ENCODE measurements at regions of chr19 and their contacts with region 1.

Region 1: DNA sequence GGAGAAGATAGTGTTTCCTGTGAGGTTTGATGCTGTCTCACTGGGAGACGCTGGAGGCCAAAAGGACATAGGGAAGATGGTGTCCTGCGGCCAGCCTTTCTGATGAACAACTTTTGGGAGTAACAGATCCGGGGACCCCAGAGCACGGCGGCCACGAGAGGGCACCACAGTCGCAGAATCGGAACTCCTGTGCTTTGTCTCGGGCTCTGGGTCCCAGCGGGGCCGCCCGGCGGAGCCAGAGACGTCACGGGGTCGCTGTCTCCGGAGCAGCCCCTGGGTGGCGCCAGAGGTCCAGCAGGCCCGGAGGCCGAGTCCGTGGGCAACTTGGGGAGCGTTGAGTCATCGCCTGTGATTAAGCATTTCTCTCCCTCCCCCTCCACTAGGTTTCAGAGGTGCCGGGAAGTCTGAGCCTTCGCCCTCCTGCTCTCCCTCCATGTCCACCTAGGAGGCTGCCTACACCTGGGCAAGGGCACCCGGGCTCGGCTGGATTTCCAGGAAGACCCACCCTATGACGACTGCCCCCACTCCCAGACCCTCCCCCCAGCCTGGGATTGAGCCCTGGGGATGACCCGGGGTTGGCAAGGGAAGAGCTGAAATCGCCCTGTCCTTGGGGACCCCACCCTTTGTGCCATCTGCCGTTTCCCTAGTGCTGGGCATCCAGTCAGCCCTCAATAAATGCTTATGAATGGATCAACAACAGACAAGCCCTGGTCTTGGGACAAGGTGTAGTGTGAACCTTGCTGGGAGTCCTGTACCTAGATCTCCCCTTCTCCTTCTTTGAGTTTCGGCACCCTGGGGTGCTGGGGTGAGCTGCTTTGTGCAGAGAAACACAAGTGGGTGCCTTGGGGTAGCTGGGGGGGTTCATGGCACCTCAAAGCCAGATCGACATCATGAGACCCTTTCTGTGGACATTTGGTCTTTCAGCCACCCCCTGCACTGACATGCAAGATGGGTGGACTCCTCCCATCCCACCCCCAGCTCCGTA is 3.4 kb downstream of the NANOS3 start:
- DNase-seq: peak; percentile 95 to 96 (median 96)
- H3K4me3 ChIP-seq: peak overlapping the region in 1 of 2 donors; percentile 25
- H3K4me3 Mint-ChIP-seq: peak overlapping the region; percentile 56 to 85 (median 66)
- H3K27ac ChIP-seq: peak overlapping the region; percentile 64
- H3K27ac Mint-ChIP-seq: peak overlapping the region; percentile 78 to 89 (median 84)
- H3K4me1 ChIP-seq: peaks cover 39% of the 10 kb centered on the region
- H3K4me1 Mint-ChIP-seq: peaks cover 22 to 44% (median 35%) of the 10 kb centered on the region in 4 donors
- H3K27me3 ChIP-seq: no peaks in the 10 kb centered on the region
- H3K27me3 Mint-ChIP-seq: no peaks in the 10 kb centered on the region

Region 2: GRCh38 chr19:13707915-13708314 is 172.4 kb before region 1 on chr19:
- CTCF ChIA-PET with region 1: no interaction called
- POLR2A ChIA-PET with region 1: no interaction called
- intact Hi-C with region 1: no loop called
- DNase-seq: no peak
- H3K4me3 ChIP-seq: no peak overlapping the region
- H3K4me3 Mint-ChIP-seq: no peak overlapping the region
- H3K27ac ChIP-seq: no peak overlapping the region
- H3K27ac Mint-ChIP-seq: no peak overlapping the region
- H3K4me1 ChIP-seq: no peaks in the 10 kb centered on the region
- H3K4me1 Mint-ChIP-seq: no peaks in the 10 kb centered on the region
- H3K27me3 ChIP-seq: no peaks in the 10 kb centered on the region
- H3K27me3 Mint-ChIP-seq: peaks cover 14 to 15% of the 10 kb centered on the region in 2 donors

Region 3: DNA sequence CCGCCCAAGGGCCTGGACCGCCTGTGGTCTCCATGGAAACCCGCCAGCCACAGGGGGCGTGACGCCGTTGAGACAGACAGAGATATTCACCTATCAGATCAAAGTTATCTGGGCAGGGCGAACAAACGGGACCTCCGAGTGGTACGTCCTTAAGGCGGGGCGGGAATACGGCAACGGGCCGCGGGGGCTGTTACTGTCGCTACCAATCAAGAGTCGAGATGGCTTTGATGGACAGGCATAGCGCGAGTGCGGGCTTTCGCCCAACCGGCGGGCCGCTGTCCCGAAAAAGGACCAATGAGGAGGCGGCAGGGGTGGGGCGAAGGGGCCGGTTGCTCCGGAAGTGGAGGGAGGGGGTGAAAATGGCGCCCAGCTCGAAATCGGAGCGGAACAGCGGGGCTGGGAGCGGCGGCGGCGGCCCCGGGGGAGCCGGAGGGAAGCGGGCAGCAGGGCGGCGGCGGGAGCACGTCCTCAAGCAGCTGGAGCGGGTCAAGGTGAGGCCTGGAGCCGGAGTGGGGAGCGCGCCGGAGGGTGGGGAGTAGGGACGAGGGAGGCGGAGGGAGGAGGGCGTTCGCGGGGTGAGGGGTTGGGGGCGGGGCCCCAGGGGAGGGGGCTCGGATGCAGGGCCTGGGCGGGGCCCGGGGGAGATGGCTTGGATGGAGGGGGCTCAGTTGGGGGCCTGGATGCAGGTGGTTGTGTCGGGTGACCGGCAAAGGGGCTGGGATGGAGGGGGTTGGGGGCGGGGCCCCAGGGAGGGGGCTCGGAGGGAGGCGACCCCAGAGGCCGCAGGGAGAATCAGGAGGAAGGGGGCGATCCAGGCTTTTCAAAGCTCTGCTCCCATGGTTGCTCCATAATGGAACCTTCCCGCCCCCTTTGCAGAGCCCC is 72.0 kb after region 1 on chr19 and contains the start of gene DCAF15:
- CTCF ChIA-PET with region 1: interaction called, 5 read pairs
- POLR2A ChIA-PET with region 1: interaction called, 6 read pairs
- intact Hi-C with region 1: loop called (anchors 1 kb)
- DNase-seq: peak; percentile 98 to 100 (median 99)
- H3K4me3 ChIP-seq: peak within 1 kb of the TSS; percentile 43 to 71
- H3K4me3 Mint-ChIP-seq: peak within 1 kb of the TSS; percentile 88 to 96 (median 92)
- H3K27ac ChIP-seq: peak within 1 kb of the TSS; percentile 80
- H3K27ac Mint-ChIP-seq: peak within 1 kb of the TSS; percentile 86 to 99 (median 96)
- H3K4me1 ChIP-seq: peaks cover 22% of the 10 kb centered on the region
- H3K4me1 Mint-ChIP-seq: peaks cover 12 to 28% (median 17%) of the 10 kb centered on the region in 4 donors
- H3K27me3 ChIP-seq: no peaks in the 10 kb centered on the region
- H3K27me3 Mint-ChIP-seq: no peaks in the 10 kb centered on the region
- total RNA-seq, gene DCAF15: 92.9 to 96.7 TPM

Region 4: GRCh38 chr19:14031719-14032480 is 151.5 kb after region 1 on chr19 and contains the start of gene IL27RA:
- CTCF ChIA-PET with region 1: interaction called, 10 read pairs
- POLR2A ChIA-PET with region 1: interaction called, 43 read pairs
- intact Hi-C with region 1: loop called (anchors 1 kb)
- DNase-seq: peak; percentile 84 to 88 (median 87)
- H3K4me3 ChIP-seq: peak within 1 kb of the TSS; percentile 70 to 97
- H3K4me3 Mint-ChIP-seq: peak within 1 kb of the TSS; percentile 89 to 97 (median 94)
- H3K27ac ChIP-seq: peak within 1 kb of the TSS; percentile 96
- H3K27ac Mint-ChIP-seq: peak within 1 kb of the TSS; percentile 93 to 99 (median 98)
- H3K4me1 ChIP-seq: peaks cover 30% of the 10 kb centered on the region
- H3K4me1 Mint-ChIP-seq: peaks cover 23 to 56% (median 37%) of the 10 kb centered on the region in 4 donors
- H3K27me3 ChIP-seq: no peaks in the 10 kb centered on the region
- H3K27me3 Mint-ChIP-seq: no peaks in the 10 kb centered on the region
- total RNA-seq, gene IL27RA: 74.3 to 76.2 TPM

Region 5: GRCh38 chr19:14073261-14073924 is 193.0 kb after region 1 on chr19:
- CTCF ChIA-PET with region 1: interaction called, 41 read pairs
- POLR2A ChIA-PET with region 1: interaction called, 30 read pairs
- intact Hi-C with region 1: loop called (anchors 1 kb)
- DNase-seq: peak; percentile 80 to 88 (median 84)
- H3K4me3 ChIP-seq: peak overlapping the region; percentile 70 to 90
- H3K4me3 Mint-ChIP-seq: peak overlapping the region; percentile 89 to 98 (median 93)
- H3K27ac ChIP-seq: peak overlapping the region; percentile 61
- H3K27ac Mint-ChIP-seq: peak overlapping the region; percentile 70 to 97 (median 88)
- H3K4me1 ChIP-seq: peaks cover 31% of the 10 kb centered on the region
- H3K4me1 Mint-ChIP-seq: peaks cover 7 to 28% (median 15%) of the 10 kb centered on the region in 4 donors
- H3K27me3 ChIP-seq: no peaks in the 10 kb centered on the region
- H3K27me3 Mint-ChIP-seq: no peaks in the 10 kb centered on the region

Region 6: DNA sequence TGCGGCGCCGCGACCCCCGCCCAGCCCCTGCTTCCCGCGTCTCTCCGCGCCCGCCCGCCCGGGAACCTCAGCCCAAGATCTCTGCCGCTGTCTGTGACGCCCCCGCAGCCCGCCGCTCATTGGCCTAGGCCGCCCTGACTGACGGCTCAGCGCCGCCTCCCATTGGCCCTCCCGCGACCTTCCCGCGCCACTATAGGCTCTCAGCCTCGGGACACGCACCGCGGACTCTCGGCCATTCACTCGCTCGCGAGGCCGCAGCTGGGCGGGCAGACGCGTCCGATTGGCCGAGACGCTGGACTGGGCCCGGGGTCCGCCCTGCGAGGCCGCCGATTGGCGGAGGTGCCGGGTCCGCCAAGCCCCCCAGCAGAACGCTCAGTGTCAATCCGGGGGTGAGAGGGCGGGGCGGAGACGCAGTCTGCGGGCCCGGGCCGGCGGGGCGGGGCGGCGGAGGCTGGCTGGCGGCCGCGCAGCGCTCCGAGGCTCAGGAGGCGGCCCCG is 237.4 kb after region 1 on chr19 and contains the start of gene PRKACA:
- CTCF ChIA-PET with region 1: interaction called, 8 read pairs
- POLR2A ChIA-PET with region 1: interaction called, 4 read pairs
- intact Hi-C with region 1: loop called (anchors 2 kb)
- DNase-seq: peak; percentile 97 to 99 (median 99)
- H3K4me3 ChIP-seq: peak within 1 kb of the TSS; percentile 57 to 63
- H3K4me3 Mint-ChIP-seq: peak within 1 kb of the TSS; percentile 92 to 98 (median 96)
- H3K27ac ChIP-seq: peak within 1 kb of the TSS; percentile 73
- H3K27ac Mint-ChIP-seq: peak within 1 kb of the TSS; percentile 95 to 98 (median 98)
- H3K4me1 ChIP-seq: peaks cover 41% of the 10 kb centered on the region
- H3K4me1 Mint-ChIP-seq: peaks cover 23 to 50% (median 39%) of the 10 kb centered on the region in 4 donors
- H3K27me3 ChIP-seq: no peaks in the 10 kb centered on the region
- H3K27me3 Mint-ChIP-seq: no peaks in the 10 kb centered on the region
- total RNA-seq, gene PRKACA: 48.9 to 51.7 TPM

Measured in CD4-positive, alpha-beta memory T cell (primary cell).